ENCODE measurements at regions of chr15 and their contacts with region 1.

Region 1: GRCh38 chr15:63504247-63504978 is at the start of gene USP3:
- DNase-seq: peak; percentile 96
- ATAC-seq: peak; percentile 53
- H3K4me3 Mint-ChIP-seq: peak within 1 kb of the TSS; percentile 94
- H3K27ac Mint-ChIP-seq: peak within 1 kb of the TSS; percentile 97
- H3K4me1 Mint-ChIP-seq: peaks cover 74% of the 10 kb centered on the region
- H3K27me3 Mint-ChIP-seq: no peaks in the 10 kb centered on the region
- total RNA-seq, gene USP3: 51.1 to 51.7 TPM

Region 2: DNA sequence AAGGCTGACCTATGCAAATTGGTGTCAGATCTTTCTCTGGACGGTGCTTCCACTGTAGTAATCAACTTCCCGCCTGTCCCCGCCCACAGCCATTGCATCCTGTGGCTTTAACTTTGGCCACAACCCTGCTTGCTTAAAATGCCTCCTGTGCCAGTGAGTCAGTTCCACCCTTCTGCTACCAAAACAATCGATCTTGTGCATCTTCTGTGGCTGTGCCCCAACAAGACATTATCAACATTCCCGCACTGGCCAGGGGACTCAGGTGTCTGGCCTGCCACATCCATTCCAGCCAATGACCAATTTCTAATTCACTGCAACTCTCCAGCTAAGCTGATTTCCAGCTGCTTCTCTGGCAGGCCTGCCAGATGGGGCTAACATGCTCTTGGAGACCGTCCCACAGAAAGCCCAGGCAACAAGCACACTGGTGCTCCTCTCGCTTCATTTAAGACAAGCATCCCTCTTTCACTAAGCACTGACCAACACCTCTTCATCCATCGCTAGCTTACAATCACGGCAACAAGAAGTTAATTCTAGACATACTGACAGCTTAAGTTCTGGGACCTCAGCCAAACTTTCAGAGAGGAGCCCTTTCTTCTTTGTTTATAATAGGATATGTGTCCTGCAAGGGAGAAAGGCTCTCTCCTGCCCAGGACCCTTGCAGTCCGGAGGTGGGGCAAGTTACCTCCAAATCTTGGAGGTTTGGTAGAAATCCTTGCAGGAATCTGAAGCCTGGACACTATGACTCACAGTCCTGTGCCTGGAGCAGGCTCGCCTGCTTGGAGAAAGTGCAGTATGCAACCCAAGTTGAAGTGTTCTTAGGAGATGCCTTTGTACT is 129.5 kb before region 1 on chr15:
- CTCF ChIA-PET with region 1: no interaction called
- POLR2A ChIA-PET with region 1: interaction called, 4 read pairs
- intact Hi-C with region 1: loop called in 1 of 2 experiments (anchors 5 kb)
- DNase-seq: peak; percentile 73
- ATAC-seq: peak; percentile 25
- H3K4me3 Mint-ChIP-seq: peak overlapping the region; percentile 15
- H3K27ac Mint-ChIP-seq: peak overlapping the region; percentile 67
- H3K4me1 Mint-ChIP-seq: peaks cover 51% of the 10 kb centered on the region
- H3K27me3 Mint-ChIP-seq: peaks cover 24% of the 10 kb centered on the region

Region 3: DNA sequence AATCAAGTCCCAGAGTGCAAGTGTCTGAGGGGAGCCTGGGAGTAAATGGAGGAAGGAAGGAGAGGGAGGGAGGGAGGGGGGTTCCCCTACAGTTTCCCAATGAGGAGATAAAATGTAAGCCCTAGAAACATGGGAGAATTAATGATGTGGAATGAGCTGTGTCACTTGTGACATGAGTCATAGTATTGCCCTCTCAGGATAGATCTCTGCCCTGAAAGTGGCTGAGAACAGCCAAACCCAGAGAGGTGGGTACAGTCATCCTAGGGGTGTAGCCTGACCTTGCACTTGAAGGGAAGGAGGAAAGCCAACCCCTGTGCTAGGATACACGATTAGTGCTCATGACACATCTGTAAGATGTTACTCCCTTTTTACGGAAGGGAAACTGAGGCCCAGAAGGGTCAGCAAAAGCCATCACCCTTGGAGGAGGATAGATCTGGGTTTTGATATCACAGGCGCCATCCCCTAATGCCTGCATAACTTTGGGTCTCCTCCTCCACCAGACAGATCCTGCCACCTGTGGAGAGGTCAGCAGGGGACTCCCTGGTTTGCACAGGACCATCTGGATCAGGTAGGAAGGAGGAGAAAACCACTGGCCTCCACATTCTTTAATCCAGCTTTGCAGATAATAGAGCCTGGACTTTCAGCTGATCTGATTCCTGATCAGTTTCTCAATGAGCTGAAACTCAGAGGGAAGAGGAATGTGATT is 23.2 kb before region 1 on chr15:
- CTCF ChIA-PET with region 1: interaction called, 78 read pairs
- POLR2A ChIA-PET with region 1: interaction called, 5 read pairs
- intact Hi-C with region 1: loop called (anchors 1 kb)
- DNase-seq: peak; percentile 68
- ATAC-seq: peak; percentile 71
- H3K4me3 Mint-ChIP-seq: no peak overlapping the region
- H3K27ac Mint-ChIP-seq: peak overlapping the region; percentile 88
- H3K4me1 Mint-ChIP-seq: peaks cover 84% of the 10 kb centered on the region
- H3K27me3 Mint-ChIP-seq: no peaks in the 10 kb centered on the region

Region 4: DNA sequence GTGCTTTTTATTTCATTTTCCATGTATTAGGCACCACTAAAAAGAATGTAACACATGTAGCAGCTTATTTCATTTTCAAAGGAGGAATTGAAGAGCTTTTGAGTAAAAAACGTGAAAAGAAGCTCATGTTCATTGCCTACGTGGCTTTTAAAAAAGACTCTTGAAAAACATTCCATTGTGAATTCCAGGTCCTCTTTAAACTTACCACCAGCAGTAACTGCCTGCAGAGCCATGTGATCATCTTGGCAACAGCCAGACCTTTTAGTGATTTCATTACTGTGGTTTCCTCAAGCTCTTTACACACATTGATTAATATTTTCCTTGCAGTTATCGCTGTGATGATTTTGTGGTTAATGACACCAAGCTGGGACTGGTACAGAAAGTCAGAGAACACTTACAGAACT is 49.0 kb after region 1 on chr15:
- CTCF ChIA-PET with region 1: interaction called, 8 read pairs
- POLR2A ChIA-PET with region 1: no interaction called
- intact Hi-C with region 1: loop called (anchors 2 to 5 kb)
- DNase-seq: peak; percentile 30
- ATAC-seq: peak; percentile 72
- H3K4me3 Mint-ChIP-seq: peak overlapping the region; percentile 35
- H3K27ac Mint-ChIP-seq: peak overlapping the region; percentile 51
- H3K4me1 Mint-ChIP-seq: peaks cover 50% of the 10 kb centered on the region
- H3K27me3 Mint-ChIP-seq: no peaks in the 10 kb centered on the region

Region 5: GRCh38 chr15:63610200-63610841 is 105.9 kb after region 1 on chr15:
- CTCF ChIA-PET with region 1: interaction called, 4 read pairs
- POLR2A ChIA-PET with region 1: interaction called, 15 read pairs
- intact Hi-C with region 1: no loop called
- DNase-seq: peak; percentile 88
- ATAC-seq: peak; percentile 79
- H3K4me3 Mint-ChIP-seq: no peak overlapping the region
- H3K27ac Mint-ChIP-seq: peak overlapping the region; percentile 88
- H3K4me1 Mint-ChIP-seq: peaks cover 39% of the 10 kb centered on the region
- H3K27me3 Mint-ChIP-seq: no peaks in the 10 kb centered on the region

Region 6: DNA sequence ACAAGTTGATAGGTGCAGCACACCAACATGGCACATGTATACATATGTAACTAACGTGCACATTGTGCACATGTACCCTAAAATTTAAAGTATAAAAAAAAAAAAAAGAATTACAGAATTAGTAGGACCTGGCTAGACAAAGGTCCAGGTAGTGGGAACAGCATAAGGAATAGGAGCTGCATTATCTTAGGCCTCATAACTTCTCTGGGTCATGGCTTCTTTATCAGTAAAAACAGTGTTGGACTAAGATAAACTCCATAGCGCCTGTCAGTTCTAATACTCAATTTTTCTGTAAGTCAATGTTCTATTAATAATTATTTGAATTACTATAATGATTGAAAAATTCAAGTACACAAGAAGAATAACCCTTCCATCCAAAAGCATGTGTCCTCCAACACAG is 231.0 kb after region 1 on chr15:
- CTCF ChIA-PET with region 1: no interaction called
- POLR2A ChIA-PET with region 1: no interaction called
- intact Hi-C with region 1: no loop called
- DNase-seq: no peak
- ATAC-seq: no peak
- H3K4me3 Mint-ChIP-seq: no peak overlapping the region
- H3K27ac Mint-ChIP-seq: no peak overlapping the region
- H3K4me1 Mint-ChIP-seq: peaks cover 2% of the 10 kb centered on the region
- H3K27me3 Mint-ChIP-seq: no peaks in the 10 kb centered on the region

Region 7: DNA sequence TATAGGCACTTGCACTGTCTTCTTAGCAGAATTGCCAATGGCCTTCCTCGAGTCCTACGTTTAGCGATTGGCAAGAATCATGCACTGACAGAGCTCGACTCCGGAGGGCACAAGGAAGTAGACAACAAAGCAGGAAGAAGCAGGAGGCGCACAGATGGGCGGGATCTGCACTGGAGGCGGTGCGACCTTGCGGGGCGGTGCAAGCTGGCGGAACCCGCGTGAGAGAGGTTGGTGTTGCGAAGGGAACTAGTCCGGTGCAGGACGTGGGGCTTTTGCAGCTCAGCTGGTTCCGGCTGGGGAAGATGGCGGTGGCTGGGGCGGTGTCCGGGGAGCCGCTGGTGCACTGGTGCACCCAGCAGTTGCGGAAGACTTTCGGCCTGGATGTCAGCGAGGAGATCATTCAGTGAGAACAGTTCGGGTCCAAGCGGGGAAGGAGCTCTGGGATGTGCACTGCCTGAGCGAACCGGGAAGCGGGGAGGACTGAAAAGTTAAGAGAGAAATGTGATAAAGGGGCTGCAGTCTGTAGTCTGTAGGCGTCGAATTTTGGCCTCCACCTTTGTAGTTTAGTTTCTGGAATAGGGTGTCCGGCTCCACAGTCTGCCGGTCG is 883.3 kb after region 1 on chr15 and contains the start of gene TRIP4:
- CTCF ChIA-PET with region 1: no interaction called
- POLR2A ChIA-PET with region 1: no interaction called
- intact Hi-C with region 1: loop called in 1 of 2 experiments (anchors 10 kb)
- DNase-seq: peak; percentile 98
- ATAC-seq: peak; percentile 100
- H3K4me3 Mint-ChIP-seq: peak within 1 kb of the TSS; percentile 85
- H3K27ac Mint-ChIP-seq: peak within 1 kb of the TSS; percentile 91
- H3K4me1 Mint-ChIP-seq: peaks cover 17% of the 10 kb centered on the region
- H3K27me3 Mint-ChIP-seq: no peaks in the 10 kb centered on the region
- total RNA-seq, gene TRIP4: 13.1 to 19.6 TPM

Region 8: GRCh38 chr15:64856429-64857145 is 1352.2 kb after region 1 on chr15:
- CTCF ChIA-PET with region 1: no interaction called
- POLR2A ChIA-PET with region 1: no interaction called
- intact Hi-C with region 1: no loop called
- DNase-seq: no peak
- ATAC-seq: no peak
- H3K4me3 Mint-ChIP-seq: no peak overlapping the region
- H3K27ac Mint-ChIP-seq: peak overlapping the region; percentile 74
- H3K4me1 Mint-ChIP-seq: peaks cover 45% of the 10 kb centered on the region
- H3K27me3 Mint-ChIP-seq: no peaks in the 10 kb centered on the region